Testis (tissue), 5 donors: ENCODE measurements at regions of chr9 and their contacts with region 1.

Region 1: DNA sequence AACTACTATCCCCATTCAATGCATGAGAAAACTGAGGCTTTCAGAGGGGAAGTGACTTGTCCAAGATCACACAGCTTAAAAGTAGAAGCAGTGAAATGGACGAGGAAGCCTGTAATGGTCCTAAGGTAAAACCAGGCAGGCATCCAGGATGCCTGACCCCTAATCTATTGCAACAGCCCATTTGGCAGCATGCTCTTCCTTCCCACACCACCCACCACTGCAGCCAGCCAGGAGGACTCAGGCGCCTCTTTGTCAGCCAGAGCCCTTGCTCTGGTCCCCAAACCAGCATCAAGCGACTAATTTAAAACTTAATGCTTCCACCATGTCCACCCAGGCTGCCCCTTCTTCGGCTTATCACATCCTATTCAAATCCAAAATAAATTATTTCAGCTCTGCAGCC is 541.6 kb downstream of the CDK5RAP2 start:
- DNase-seq: no peak
- H3K4me3 ChIP-seq: no peak overlapping the region
- H3K27ac ChIP-seq: no peak overlapping the region
- H3K4me1 ChIP-seq: no peaks in the 10 kb centered on the region
- H3K27me3 ChIP-seq: no peaks in the 10 kb centered on the region
- CTCF ChIP-seq: no peak
- POLR2A ChIP-seq: no peak

Region 2: DNA sequence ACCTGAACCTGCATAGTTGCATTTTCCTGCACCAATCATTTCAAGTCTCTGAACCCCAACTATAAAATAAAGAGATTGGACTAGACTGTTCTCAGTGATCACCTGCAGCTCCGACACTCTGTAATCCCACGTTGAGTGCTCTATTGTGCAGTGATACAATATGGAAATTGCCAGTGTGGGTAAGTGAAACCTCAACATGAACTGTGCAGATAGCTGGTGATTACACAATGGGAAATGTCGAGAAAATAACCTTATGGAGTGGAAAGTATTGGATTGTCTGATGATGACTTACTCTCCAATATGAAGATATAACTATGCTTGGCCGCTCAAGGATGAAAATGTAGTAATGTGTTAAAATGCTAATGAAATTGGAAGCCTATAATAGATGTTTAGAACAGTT is 376.0 kb before region 1 on chr9:
- intact Hi-C with region 1: loop called (anchors 5 kb)
- DNase-seq: no peak
- H3K4me3 ChIP-seq: no peak overlapping the region
- H3K27ac ChIP-seq: no peak overlapping the region
- H3K4me1 ChIP-seq: no peaks in the 10 kb centered on the region
- H3K27me3 ChIP-seq: no peaks in the 10 kb centered on the region
- CTCF ChIP-seq: no peak
- POLR2A ChIP-seq: no peak